Activated B cell treated with CpG ODN at 0.5 μM for 24 hours (primary cell): ENCODE measurements at regions of chr16 and their contacts with region 1.

Region 1: DNA sequence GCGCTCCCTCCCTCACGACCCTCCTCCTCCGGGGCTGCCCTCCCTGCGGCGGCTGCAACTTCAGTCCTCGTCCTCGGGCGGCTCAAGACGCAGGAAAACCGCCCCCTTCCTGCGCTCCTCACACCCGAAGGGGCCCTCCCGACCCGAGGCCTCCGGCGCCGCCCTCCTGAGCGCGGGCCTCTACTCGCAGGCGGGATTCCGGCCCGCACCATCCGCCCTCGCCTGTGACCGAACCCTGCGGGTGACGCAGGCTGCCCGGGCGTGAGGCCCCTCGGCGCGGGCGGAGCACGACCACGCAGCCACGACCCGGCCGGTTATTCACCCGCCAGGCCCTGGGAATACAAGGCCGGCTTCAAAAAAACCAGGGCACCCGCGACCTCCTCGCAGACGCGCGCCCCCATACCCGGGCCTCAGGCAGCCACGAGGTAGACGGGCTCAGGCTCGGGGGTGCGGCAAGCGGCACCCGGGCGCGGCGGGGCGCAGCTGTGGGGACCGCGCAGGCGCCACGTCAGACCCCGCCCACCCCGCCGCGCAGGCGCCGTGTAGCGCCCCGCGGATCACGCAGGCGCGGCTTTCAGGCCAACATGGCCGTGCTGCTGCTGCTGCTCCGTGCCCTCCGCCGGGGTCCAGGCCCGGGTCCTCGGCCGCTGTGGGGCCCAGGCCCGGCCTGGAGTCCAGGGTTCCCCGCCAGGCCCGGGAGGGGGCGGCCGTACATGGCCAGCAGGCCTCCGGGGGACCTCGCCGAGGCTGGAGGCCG is at the start of gene SPG7:
- DNase-seq: peak; percentile 98
- ATAC-seq: peak; percentile 74
- H3K4me3 Mint-ChIP-seq: peak within 1 kb of the TSS; percentile 88
- H3K27ac Mint-ChIP-seq: peak within 1 kb of the TSS; percentile 87
- H3K4me1 Mint-ChIP-seq: peaks cover 41% of the 10 kb centered on the region
- H3K27me3 Mint-ChIP-seq: no peaks in the 10 kb centered on the region
- CTCF ChIP-seq: no peak
- total RNA-seq, gene SPG7: 84.7 and 102 TPM in 2 replicates

Region 2: GRCh38 chr16:89241187-89242007 is 266.6 kb before region 1 on chr16:
- CTCF ChIA-PET with region 1: interaction called, 4 read pairs
- POLR2A ChIA-PET with region 1: no interaction called
- intact Hi-C with region 1: loop called (anchors 1 kb)
- DNase-seq: peak; percentile 75
- ATAC-seq: peak; percentile 77
- H3K4me3 Mint-ChIP-seq: peak overlapping the region; percentile 99
- H3K27ac Mint-ChIP-seq: peak overlapping the region; percentile 99
- H3K4me1 Mint-ChIP-seq: peaks cover 29% of the 10 kb centered on the region
- H3K27me3 Mint-ChIP-seq: no peaks in the 10 kb centered on the region
- CTCF ChIP-seq: no peak

Region 3: DNA sequence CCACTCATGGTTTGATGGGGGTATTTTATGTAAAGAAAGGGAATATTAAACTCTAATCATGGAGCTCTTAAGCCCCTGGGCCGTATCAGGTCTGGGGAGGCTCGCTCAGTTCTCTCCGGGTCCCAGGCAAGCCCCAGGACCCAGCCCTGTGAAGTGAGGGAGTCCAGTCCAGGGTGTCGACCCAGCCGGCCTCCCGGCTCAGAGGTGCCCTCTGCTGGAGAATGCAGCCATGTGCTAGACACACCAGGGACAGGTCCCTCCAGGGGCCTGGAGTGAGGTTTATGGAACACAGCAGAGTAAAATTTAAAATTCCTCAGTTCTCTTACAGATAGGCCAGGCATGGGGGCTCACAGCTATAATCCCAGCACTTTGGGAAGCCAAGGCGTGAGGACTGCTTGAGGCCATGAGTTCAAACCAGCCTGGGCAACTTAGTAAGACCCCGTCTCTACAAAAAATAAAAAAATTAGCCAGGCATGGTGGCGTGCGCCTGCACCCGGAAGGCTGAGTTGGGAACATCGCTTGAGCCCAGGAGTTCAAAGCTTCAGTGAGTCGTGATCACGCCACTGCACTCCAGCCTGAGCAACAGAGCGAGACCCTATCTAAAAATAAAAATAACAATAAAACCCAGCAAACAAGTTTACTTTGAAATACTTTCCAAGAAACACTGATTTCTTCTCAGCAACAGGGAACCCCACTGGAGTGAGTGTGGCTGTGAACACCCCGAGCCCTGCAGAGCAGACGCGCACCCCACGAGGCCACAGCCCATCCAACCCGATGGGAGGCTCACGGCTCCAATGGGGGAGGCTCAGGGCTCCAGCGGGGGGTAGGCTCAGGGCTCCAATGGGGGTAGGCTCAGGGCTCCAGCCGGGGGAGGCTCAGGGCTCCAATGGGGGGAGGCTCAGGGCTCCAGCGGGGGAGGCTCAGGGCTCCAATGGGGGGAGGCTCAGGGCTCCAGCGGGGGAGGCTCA is 218.3 kb before region 1 on chr16:
- CTCF ChIA-PET with region 1: interaction called, 12 read pairs
- POLR2A ChIA-PET with region 1: no interaction called
- intact Hi-C with region 1: no loop called
- DNase-seq: peak; percentile 53
- ATAC-seq: peak; percentile 91
- H3K4me3 Mint-ChIP-seq: no peak overlapping the region
- H3K27ac Mint-ChIP-seq: no peak overlapping the region
- H3K4me1 Mint-ChIP-seq: peaks cover 4% of the 10 kb centered on the region
- H3K27me3 Mint-ChIP-seq: no peaks in the 10 kb centered on the region
- CTCF ChIP-seq: peak; percentile 48

Region 4: DNA sequence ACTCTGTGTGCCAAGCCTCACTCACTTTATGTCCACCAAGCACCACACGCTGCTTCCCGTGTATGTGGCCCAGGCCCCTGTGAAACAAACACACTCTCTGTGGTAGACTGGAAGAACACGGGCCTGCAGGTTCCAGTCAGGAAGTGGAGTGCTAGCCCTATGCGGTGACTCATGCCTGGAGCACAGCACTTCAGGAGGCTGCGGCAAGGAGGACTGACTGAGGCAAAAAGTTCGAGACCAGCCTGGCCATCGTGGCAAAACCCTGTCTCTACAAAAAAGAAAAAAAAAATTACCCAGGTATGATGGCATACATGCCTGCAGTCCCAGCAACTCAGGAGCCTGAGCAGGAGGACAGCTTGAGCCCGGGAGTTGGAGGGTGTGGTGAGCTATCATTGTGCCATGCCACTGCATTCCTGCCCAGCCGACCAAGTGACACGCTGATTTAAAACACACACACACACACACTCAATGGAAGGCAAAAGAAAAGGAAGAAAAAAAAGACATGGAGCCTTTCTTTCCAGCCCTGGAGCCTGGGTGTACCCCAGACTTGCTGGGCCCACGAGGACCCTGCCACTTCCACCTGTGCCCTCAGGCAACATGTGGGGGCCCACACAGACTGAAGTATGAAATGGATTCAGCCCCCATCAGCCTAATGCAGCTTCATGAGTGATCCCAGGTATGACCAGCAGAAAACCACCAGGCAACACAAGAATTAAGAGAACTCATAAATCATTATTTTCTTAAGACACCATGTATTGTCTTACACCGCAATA is 144.2 kb before region 1 on chr16:
- CTCF ChIA-PET with region 1: no interaction called
- POLR2A ChIA-PET with region 1: interaction called, 3 read pairs
- intact Hi-C with region 1: loop called (anchors 2 kb)
- DNase-seq: no peak
- ATAC-seq: no peak
- H3K4me3 Mint-ChIP-seq: no peak overlapping the region
- H3K27ac Mint-ChIP-seq: peak overlapping the region; percentile 31
- H3K4me1 Mint-ChIP-seq: peaks cover 98% of the 10 kb centered on the region
- H3K27me3 Mint-ChIP-seq: no peaks in the 10 kb centered on the region
- CTCF ChIP-seq: no peak

Region 5: DNA sequence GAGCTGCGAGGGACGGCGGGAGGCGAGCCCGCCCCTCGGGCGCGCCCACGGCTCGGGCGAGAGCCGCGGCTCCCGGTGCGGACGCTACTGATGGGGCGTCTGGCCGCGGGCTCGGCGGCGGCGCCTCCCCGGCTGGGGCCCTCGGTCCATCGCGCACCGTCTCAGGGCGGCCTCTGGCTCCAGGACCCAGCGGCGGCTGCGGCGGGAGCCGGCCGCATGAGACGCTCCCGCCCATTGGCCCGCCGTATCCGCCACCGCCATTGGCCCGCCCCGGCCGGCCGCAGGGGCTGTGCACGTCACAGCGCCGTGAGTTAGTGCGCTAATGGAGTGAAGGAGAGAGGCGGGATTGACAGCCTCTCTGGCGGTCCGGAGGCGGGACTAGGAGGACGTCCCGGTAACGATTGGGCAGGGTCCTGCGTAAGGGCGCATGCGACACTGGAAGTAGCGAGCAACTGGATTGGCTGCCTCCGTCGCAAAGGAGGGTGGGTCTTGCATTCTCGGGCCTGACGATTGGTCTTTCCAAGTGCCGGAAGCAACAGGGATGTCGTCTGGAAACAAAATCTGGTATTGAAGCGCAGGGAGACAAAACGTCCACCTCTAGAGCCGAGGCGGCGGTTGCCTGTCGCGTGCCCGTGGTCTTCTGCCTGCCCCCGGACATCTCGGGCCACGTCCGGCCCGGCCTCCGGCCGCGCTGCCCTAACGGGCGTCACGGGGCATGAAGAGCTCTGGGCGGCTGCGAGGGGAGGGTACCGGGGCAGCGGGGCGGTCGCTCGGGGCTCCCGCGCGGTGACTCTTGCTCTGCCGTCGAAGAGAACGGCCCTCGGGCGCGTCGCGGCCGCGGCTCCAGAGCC is 17.4 kb before region 1 on chr16 and contains the start of gene ANKRD11:
- CTCF ChIA-PET with region 1: interaction called, 7 read pairs
- POLR2A ChIA-PET with region 1: interaction called, 68 read pairs
- intact Hi-C with region 1: loop called (anchors 1 kb)
- DNase-seq: peak; percentile 99
- ATAC-seq: peak; percentile 80
- H3K4me3 Mint-ChIP-seq: peak within 1 kb of the TSS; percentile 91
- H3K27ac Mint-ChIP-seq: peak within 1 kb of the TSS; percentile 97
- H3K4me1 Mint-ChIP-seq: peaks cover 58% of the 10 kb centered on the region
- H3K27me3 Mint-ChIP-seq: no peaks in the 10 kb centered on the region
- CTCF ChIP-seq: no peak
- total RNA-seq, gene ANKRD11: 216 and 243 TPM in 2 replicates

Region 6: GRCh38 chr16:89667633-89668032 is 159.6 kb after region 1 on chr16:
- CTCF ChIA-PET with region 1: no interaction called
- POLR2A ChIA-PET with region 1: no interaction called
- intact Hi-C with region 1: no loop called
- DNase-seq: no peak
- ATAC-seq: no peak
- H3K4me3 Mint-ChIP-seq: no peak overlapping the region
- H3K27ac Mint-ChIP-seq: no peak overlapping the region
- H3K4me1 Mint-ChIP-seq: peaks cover 2% of the 10 kb centered on the region
- H3K27me3 Mint-ChIP-seq: no peaks in the 10 kb centered on the region
- CTCF ChIP-seq: no peak

Region 7: GRCh38 chr16:89779231-89779908 is 271.4 kb after region 1 on chr16:
- CTCF ChIA-PET with region 1: no interaction called
- POLR2A ChIA-PET with region 1: interaction called, 12 read pairs
- intact Hi-C with region 1: no loop called
- DNase-seq: no peak
- ATAC-seq: no peak
- H3K4me3 Mint-ChIP-seq: no peak overlapping the region
- H3K27ac Mint-ChIP-seq: no peak overlapping the region
- H3K4me1 Mint-ChIP-seq: no peaks in the 10 kb centered on the region
- H3K27me3 Mint-ChIP-seq: no peaks in the 10 kb centered on the region
- CTCF ChIP-seq: no peak

Region 8: GRCh38 chr16:89999831-90000574 is 492.0 kb after region 1 on chr16:
- CTCF ChIA-PET with region 1: no interaction called
- POLR2A ChIA-PET with region 1: no interaction called
- intact Hi-C with region 1: no loop called
- DNase-seq: no peak
- ATAC-seq: no peak
- H3K4me3 Mint-ChIP-seq: no peak overlapping the region
- H3K27ac Mint-ChIP-seq: no peak overlapping the region
- H3K4me1 Mint-ChIP-seq: peaks cover 3% of the 10 kb centered on the region
- H3K27me3 Mint-ChIP-seq: no peaks in the 10 kb centered on the region
- CTCF ChIP-seq: no peak